ENCODE measurements at regions of chr5 and their contacts with region 1.

Region 1: GRCh38 chr5:91419571-91420537 is 36.7 kb upstream of the ARRDC3 start:
- DNase-seq: peak; percentile 72
- H3K4me3 Mint-ChIP-seq: no peak overlapping the region
- H3K27ac Mint-ChIP-seq: no peak overlapping the region
- H3K4me1 Mint-ChIP-seq: peaks cover 9% of the 10 kb centered on the region
- H3K27me3 Mint-ChIP-seq: peaks cover 3% of the 10 kb centered on the region

Region 2: DNA sequence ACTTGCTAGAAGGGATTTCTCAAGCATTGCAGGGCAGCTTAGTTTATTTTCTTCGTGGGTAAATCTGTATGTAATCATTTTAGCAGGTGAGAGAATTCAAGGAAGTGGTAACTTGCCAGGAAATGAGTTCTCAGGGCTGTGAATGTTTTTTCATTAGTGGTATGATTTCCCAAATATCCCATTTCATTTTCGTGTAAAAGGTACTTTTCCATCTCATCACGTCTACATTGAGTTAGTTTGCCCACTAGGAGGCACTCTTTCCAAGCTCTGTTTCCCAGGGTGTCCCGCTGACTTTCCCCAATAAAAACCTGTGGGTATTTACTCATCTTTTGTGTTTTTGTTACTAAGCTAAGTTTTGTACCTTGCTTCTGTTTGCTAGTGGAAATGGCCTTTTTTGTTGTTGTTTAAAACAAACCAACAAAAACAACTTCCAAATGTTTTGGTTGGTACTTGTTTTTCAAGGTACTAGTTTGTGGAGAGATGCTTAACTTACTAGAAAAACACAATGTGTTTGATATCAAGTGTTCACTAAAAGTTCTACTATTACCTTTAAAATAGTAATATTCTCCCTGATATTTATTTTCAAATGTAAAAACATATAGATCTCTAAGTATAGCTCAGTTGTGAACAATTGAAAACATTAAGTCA is 487.7 kb before region 1 on chr5:
- CTCF ChIA-PET with region 1: interaction called, 33 read pairs
- POLR2A ChIA-PET with region 1: no interaction called
- DNase-seq: peak; percentile 19
- H3K4me3 Mint-ChIP-seq: no peak overlapping the region
- H3K27ac Mint-ChIP-seq: no peak overlapping the region
- H3K4me1 Mint-ChIP-seq: no peaks in the 10 kb centered on the region
- H3K27me3 Mint-ChIP-seq: peaks cover 10% of the 10 kb centered on the region

Region 3: DNA sequence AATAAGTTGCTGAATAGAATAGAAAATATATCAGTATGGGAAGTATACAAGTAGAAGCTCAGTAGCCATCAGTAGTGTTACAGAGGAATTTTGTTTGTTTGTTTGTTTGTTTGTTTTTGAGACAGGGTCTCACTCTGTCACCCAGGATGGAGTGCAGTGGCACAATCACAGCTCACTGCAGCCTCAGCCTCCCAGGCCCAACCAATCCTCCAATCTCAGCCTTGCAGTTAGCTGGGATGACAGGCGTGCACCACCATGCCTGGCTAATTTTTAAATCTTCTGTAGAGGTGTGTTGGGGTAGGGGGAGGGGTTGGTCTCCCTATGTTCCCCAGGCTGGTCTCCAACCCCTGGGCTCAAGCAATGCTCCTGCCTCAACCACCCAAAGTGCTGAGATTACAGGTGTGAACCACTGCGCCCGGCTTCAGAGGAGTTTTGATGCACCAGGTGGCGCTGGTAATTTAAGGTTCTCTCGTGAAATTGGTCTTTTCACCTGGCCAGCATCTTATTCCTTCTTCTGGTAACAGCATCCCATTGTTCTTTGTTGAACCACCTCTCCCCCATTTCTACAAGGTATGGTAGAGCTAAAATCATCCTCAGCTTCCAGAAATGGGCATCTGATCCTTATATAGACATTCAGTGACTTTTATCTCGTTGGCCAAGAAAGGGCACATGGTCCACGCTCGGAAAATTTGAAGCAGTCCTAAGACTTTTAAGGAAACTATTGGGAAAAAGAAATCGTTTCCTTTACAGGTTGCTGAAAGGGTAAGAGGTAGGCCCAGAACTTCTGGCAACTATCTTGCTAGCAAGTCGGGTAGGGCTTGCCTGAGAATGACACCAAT is 193.8 kb before region 1 on chr5:
- CTCF ChIA-PET with region 1: interaction called, 55 read pairs
- POLR2A ChIA-PET with region 1: interaction called, 4 read pairs
- DNase-seq: peak; percentile 69
- H3K4me3 Mint-ChIP-seq: no peak overlapping the region
- H3K27ac Mint-ChIP-seq: no peak overlapping the region
- H3K4me1 Mint-ChIP-seq: no peaks in the 10 kb centered on the region
- H3K27me3 Mint-ChIP-seq: peaks cover 14% of the 10 kb centered on the region

Region 4: GRCh38 chr5:91403438-91403837 is 16.4 kb before region 1 on chr5:
- CTCF ChIA-PET with region 1: interaction called, 16 read pairs
- POLR2A ChIA-PET with region 1: no interaction called
- DNase-seq: no peak
- H3K4me3 Mint-ChIP-seq: no peak overlapping the region
- H3K27ac Mint-ChIP-seq: no peak overlapping the region
- H3K4me1 Mint-ChIP-seq: no peaks in the 10 kb centered on the region
- H3K27me3 Mint-ChIP-seq: no peaks in the 10 kb centered on the region

Region 5: DNA sequence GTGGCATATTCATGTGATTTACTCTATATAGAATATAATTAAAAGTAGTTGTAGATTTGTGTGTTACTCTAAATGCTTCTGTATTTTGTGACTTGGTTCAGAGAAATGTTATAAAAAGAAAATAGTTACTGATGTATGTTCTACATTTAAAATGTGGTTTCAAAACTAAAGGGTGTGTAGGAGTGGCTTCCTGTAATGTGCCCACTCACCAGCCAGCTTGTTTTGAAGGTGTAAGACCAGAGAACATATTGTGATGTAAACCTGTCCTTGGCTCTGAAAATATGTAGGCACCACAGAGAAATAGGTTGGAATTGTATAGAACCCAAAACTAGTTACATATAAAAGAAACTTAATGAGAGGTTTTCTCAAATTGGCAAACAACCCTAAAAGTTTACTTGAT is 14.5 kb after region 1 on chr5:
- CTCF ChIA-PET with region 1: interaction called, 20 read pairs
- POLR2A ChIA-PET with region 1: no interaction called
- DNase-seq: no peak
- H3K4me3 Mint-ChIP-seq: no peak overlapping the region
- H3K27ac Mint-ChIP-seq: no peak overlapping the region
- H3K4me1 Mint-ChIP-seq: peaks cover 14% of the 10 kb centered on the region
- H3K27me3 Mint-ChIP-seq: no peaks in the 10 kb centered on the region

Measured in activated CD4-positive, alpha-beta memory T cell treated with anti-CD3 and anti-CD28 coated beads, Interleukin-2, amount 10 ng/mL, durations not matched to agents 7 days and 5 days (primary cell).